Common myeloid progenitor, CD34-positive (primary cell): ENCODE measurements at regions of chr21 and their contacts with region 1.

Region 1: GRCh38 chr21:36297921-36298594 is 21.9 kb upstream of the MORC3 start:
- DNase-seq: peak; percentile 53 to 89 (median 84)
- H3K4me3 ChIP-seq: peak overlapping the region in 3 of 7 experiments; percentile 17 to 27 (median 19)
- H3K27ac ChIP-seq: peak overlapping the region; percentile 35 to 55
- H3K4me1 ChIP-seq: peaks cover 5 to 13% (median 11%) of the 10 kb centered on the region in 4 experiments
- H3K27me3 ChIP-seq: no peaks in the 10 kb centered on the region

Region 2: DNA sequence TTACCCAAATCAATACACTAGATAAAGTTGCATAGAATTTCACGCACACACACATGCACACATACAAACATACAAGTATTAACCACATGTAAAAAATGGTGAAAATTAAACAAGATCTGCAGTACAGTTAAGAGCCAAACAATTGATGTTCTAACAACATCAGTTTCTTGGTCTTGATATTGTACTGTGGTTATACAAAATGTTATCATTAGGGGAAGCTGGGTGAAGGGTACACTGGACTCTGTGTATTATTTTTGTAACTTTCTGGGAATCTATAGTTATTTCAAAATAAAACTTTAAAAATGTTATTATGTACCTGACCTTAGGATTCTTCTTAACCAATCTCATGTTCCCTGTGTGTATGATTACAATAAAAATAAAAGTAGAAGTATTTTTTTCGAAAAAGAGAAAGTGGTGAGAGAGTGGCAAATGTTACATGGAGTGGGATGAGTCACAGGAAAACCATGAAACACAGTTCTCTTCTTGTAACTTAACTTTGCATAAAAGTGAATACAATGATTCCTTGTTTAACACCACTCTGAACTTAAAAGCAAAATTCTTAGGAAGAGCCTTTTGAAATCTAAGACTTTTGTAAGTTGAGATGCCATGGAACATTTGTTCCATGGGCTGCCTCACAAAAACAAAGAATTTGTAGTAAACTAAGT is 1147.4 kb before region 1 on chr21:
- CTCF ChIA-PET with region 1: no interaction called
- POLR2A ChIA-PET with region 1: no interaction called
- DNase-seq: peak in 2 of 3 donors; percentile 9
- H3K4me3 ChIP-seq: no peak overlapping the region
- H3K27ac ChIP-seq: no peak overlapping the region
- H3K4me1 ChIP-seq: no peaks in the 10 kb centered on the region
- H3K27me3 ChIP-seq: no peaks in the 10 kb centered on the region

Region 3: GRCh38 chr21:36319765-36320420 is 21.8 kb after region 1 on chr21 and contains the start of gene MORC3:
- CTCF ChIA-PET with region 1: interaction called, 6 read pairs
- POLR2A ChIA-PET with region 1: interaction called, 16 read pairs
- DNase-seq: peak; percentile 99 to 100 (median 99)
- H3K4me3 ChIP-seq: peak within 1 kb of the TSS; percentile 83 to 99 (median 94)
- H3K27ac ChIP-seq: peak within 1 kb of the TSS; percentile 77 to 92
- H3K4me1 ChIP-seq: peaks cover 21 to 32% (median 21%) of the 10 kb centered on the region in 4 experiments
- H3K27me3 ChIP-seq: no peaks in the 10 kb centered on the region